ENCODE measurements at regions of chr16 and their contacts with region 1.

Region 1: GRCh38 chr16:9072806-9073341 is 18.6 kb upstream of the HAPSTR1 start:
- DNase-seq: peak; percentile 28
- H3K4me3 Mint-ChIP-seq: peak overlapping the region; percentile 15
- H3K27ac Mint-ChIP-seq: peak overlapping the region; percentile 91
- H3K4me1 Mint-ChIP-seq: peaks cover 44% of the 10 kb centered on the region
- H3K27me3 Mint-ChIP-seq: no peaks in the 10 kb centered on the region

Region 2: DNA sequence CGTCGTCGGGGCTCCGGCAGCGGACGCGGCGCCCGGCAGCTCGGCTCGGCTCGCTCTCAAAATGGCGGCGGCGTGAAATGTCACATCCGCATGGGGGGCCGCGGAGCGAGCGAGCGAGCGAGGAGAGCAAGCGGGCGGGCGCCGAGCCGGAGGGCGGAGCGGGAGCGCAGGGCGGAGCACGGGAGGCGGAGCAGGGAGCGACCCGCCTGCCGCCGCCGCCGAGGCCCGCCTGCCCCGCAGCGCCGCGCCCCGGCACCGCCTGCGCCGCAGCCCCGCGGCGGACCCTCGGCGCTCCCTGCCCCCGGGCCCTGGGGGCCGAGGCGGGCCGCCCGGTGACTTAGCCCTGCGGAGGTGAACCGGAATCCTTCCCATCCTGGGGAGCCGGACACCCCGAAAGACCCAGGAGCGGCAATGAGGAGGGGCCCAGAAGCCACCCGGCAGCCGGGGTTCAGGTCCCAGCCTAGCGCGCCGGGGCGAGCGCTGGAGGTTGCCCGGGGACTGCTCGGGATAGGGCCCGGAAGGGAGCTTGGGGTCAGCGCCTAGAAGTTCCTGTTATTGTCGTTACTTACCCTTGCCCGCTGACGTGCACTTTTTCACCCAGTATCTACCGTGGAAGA is 108.9 kb before region 1 on chr16 and contains the start of gene USP7:
- CTCF ChIA-PET with region 1: no interaction called
- POLR2A ChIA-PET with region 1: interaction called, 13 read pairs
- DNase-seq: peak; percentile 94
- H3K4me3 Mint-ChIP-seq: peak within 1 kb of the TSS; percentile 94
- H3K27ac Mint-ChIP-seq: peak within 1 kb of the TSS; percentile 92
- H3K4me1 Mint-ChIP-seq: peaks cover 41% of the 10 kb centered on the region
- H3K27me3 Mint-ChIP-seq: peaks cover 6% of the 10 kb centered on the region
- total RNA-seq, gene USP7: 162 to 166 TPM

Region 3: GRCh38 chr16:9102379-9102778 is 29.5 kb after region 1 on chr16:
- CTCF ChIA-PET with region 1: no interaction called
- POLR2A ChIA-PET with region 1: interaction called, 14 read pairs
- DNase-seq: no peak
- H3K4me3 Mint-ChIP-seq: no peak overlapping the region
- H3K27ac Mint-ChIP-seq: peak overlapping the region; percentile 75
- H3K4me1 Mint-ChIP-seq: peaks cover 90% of the 10 kb centered on the region
- H3K27me3 Mint-ChIP-seq: no peaks in the 10 kb centered on the region

Region 4: GRCh38 chr16:9311303-9311954 is 238.6 kb after region 1 on chr16:
- CTCF ChIA-PET with region 1: no interaction called
- POLR2A ChIA-PET with region 1: no interaction called
- DNase-seq: no peak
- H3K4me3 Mint-ChIP-seq: no peak overlapping the region
- H3K27ac Mint-ChIP-seq: no peak overlapping the region
- H3K4me1 Mint-ChIP-seq: no peaks in the 10 kb centered on the region
- H3K27me3 Mint-ChIP-seq: no peaks in the 10 kb centered on the region

Measured in activated CD4-positive, alpha-beta memory T cell treated with anti-CD3 and anti-CD28 coated beads, Interleukin-2, amount 10 ng/mL, durations not matched to agents 7 days and 5 days (primary cell).